PC-3 (cell line): ENCODE measurements at regions of chr7 and their contacts with region 1.

Region 1: DNA sequence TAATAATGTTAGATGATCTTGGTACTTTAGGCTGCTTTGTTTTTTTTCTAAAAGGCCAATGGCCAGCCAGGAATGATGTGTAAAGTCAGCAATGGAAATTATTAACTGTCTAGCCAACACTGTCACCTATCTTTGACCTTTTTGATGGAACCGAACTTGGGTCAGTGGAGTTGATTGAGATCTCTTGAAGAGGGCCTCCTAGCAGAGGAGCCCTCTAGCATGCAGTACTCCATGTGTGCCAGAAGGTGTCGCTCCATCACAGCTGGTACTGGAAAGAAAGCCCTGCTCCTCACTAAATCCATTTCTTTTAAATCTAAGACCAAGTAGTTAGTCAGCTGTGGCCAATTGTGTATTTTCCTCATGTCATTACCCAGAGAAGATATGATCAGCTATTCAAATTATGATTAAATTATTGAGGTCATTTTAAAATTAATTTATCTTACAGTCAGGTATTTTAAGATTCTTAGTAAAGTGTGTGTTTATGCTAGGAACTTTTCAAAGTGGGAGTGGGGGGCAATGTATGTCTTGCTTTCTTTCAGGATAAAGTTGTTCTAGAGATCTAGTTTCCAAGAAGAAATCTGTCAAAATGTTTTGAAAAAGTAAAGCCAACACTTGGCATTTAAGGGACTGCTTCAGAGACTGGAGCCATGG is 33.1 kb upstream of the CROT start:
- DNase-seq: peak; percentile 75
- ATAC-seq: peak; percentile 56
- H3K4me3 ChIP-seq: no peak overlapping the region
- H3K27ac ChIP-seq: no peak overlapping the region
- H3K4me1 ChIP-seq: peaks cover 13% of the 10 kb centered on the region
- H3K27me3 ChIP-seq: 0 out of 2 replicates have a peak, but pooled peaks cover 3% of the 10 kb centered on the region
- CTCF ChIP-seq: peak; percentile 98

Region 2: DNA sequence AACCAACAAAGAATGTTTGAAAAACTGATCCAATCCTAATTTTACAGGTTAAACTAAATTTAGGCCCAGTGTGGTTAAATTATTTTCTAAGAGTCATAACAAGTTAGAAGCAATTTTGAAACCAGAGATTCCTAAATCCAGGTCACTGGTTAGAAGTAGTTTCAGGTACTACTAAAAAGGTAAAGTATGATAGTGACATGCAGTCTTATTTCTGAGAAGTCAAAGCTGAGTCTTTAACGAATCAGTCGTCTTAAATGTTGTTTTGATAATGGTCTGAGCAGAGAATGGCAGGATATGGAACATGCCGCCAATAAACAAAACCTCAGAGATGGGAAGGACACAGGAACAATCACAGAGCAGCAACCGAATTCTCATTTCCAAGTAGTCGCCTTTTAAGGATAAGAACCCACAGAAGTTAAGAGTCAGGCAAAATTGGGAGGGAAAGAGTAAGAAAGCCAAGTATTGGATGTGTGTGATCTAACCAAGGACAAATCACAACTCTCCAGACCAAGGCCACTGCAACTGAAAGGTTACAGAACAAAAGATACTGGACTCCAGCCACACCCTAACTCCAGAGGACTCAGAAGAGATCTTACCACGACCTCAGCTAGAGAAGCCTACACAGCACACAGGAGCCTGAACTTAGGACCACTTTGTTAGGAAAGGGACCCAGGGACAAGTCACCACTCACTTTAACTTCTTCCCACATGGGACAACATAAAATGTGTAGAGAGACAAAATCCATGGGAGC is 112.5 kb before region 1 on chr7:
- CTCF ChIA-PET with region 1: no interaction called
- POLR2A ChIA-PET with region 1: interaction called, 13 read pairs
- intact Hi-C with region 1: no loop called
- DNase-seq: no peak
- ATAC-seq: no peak
- H3K4me3 ChIP-seq: no peak overlapping the region
- H3K27ac ChIP-seq: no peak overlapping the region
- H3K4me1 ChIP-seq: no peaks in the 10 kb centered on the region
- H3K27me3 ChIP-seq: no peaks in the 10 kb centered on the region
- CTCF ChIP-seq: no peak

Region 3: DNA sequence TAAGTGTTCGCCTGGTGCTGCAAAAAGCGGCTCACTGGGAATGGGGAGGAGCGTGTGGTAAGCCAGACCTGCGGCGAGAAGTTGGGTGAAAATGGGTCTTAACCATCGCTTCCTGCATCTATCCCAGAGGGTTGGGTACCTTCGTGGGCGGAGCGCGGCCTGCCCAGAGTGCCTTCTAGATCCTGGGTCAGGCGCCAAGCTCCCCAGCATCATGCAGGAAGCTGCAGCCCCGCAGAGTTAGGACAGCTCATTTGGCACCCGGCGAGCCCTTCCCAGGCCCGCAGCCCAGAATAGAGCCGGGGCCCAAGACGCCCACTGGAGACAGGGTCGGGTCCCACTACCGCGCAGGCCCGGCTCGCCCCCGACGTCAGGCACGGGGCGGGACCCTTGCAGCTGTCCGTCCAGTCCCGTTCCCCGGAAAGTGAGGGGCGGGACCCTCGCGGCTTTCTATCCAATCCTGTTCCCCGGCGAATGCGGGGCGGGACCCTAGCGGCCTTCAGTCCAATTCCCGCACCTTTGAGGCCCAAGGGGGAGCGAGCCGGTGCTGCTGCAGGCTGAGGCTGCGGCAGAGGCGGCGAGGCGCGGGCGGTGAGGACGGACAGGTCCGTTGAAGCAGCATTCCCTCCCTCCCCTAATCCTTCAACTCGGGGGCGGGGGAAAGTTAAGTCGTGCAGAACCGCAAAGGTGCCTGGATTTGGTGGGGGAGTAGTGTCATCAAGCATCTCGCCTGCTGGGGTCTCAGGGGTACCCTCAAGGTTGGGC is 33.0 kb after region 1 on chr7 and contains the start of gene CROT:
- CTCF ChIA-PET with region 1: no interaction called
- POLR2A ChIA-PET with region 1: no interaction called
- intact Hi-C with region 1: loop called (anchors 1 kb)
- DNase-seq: peak; percentile 91
- ATAC-seq: peak; percentile 98
- H3K4me3 ChIP-seq: peak within 1 kb of the TSS; percentile 84
- H3K27ac ChIP-seq: peak within 1 kb of the TSS; percentile 60
- H3K4me1 ChIP-seq: peaks cover 27% of the 10 kb centered on the region; the same call in 1 of the 2 replicates
- H3K27me3 ChIP-seq: no peaks in the 10 kb centered on the region
- CTCF ChIP-seq: no peak
- total RNA-seq, gene CROT: 6.9 and 7.7 TPM in 2 replicates

Region 4: GRCh38 chr7:87376036-87376435 is 63.7 kb after region 1 on chr7:
- CTCF ChIA-PET with region 1: no interaction called
- POLR2A ChIA-PET with region 1: no interaction called
- intact Hi-C with region 1: loop called (anchors 1 kb)
- DNase-seq: peak; percentile 17
- ATAC-seq: peak; percentile 85
- H3K4me3 ChIP-seq: no peak overlapping the region
- H3K27ac ChIP-seq: no peak overlapping the region
- H3K4me1 ChIP-seq: peaks cover 19% of the 10 kb centered on the region
- H3K27me3 ChIP-seq: no peaks in the 10 kb centered on the region
- CTCF ChIP-seq: no peak

Region 5: DNA sequence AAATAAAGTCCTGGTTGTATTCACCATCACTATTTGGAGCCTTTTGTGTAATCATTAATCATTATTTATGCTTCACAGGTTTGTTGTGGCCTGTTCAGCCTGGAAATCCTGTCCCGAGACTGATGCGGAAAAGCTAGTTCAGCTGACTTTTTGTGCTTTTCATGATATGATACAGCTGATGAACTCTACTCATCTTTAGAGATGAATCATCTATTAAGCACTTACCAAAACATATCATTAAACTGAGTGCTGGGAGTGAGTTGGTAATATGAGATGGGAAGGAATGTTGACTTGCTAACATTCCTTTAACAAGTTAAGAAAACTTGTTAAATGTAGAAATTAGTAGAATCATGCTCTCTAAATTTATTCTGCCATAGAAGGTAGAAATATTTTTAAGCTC is 86.1 kb after region 1 on chr7:
- CTCF ChIA-PET with region 1: no interaction called
- POLR2A ChIA-PET with region 1: no interaction called
- intact Hi-C with region 1: loop called (anchors 1 kb)
- DNase-seq: peak; percentile 73
- ATAC-seq: peak; percentile 87
- H3K4me3 ChIP-seq: no peak overlapping the region
- H3K27ac ChIP-seq: no peak overlapping the region
- H3K4me1 ChIP-seq: peaks cover 29% of the 10 kb centered on the region
- H3K27me3 ChIP-seq: no peaks in the 10 kb centered on the region
- CTCF ChIP-seq: no peak

Region 6: GRCh38 chr7:87416682-87417587 is 104.6 kb after region 1 on chr7:
- CTCF ChIA-PET with region 1: interaction called, 6 read pairs
- POLR2A ChIA-PET with region 1: interaction called, 4 read pairs
- intact Hi-C with region 1: loop called (anchors 1 kb)
- DNase-seq: peak; percentile 85
- ATAC-seq: 0 out of 2 replicates have a peak, but pooled peaks have one; percentile 11
- H3K4me3 ChIP-seq: no peak overlapping the region
- H3K27ac ChIP-seq: no peak overlapping the region
- H3K4me1 ChIP-seq: peaks cover 25% of the 10 kb centered on the region
- H3K27me3 ChIP-seq: 0 out of 2 replicates have a peak, but pooled peaks cover 7% of the 10 kb centered on the region
- CTCF ChIP-seq: peak; percentile 87

Region 7: GRCh38 chr7:87452273-87452672 is 139.9 kb after region 1 on chr7:
- CTCF ChIA-PET with region 1: no interaction called
- POLR2A ChIA-PET with region 1: no interaction called
- intact Hi-C with region 1: loop called (anchors 1 kb)
- DNase-seq: no peak
- ATAC-seq: peak; percentile 53; the same call in 1 of the 2 replicates
- H3K4me3 ChIP-seq: no peak overlapping the region
- H3K27ac ChIP-seq: no peak overlapping the region
- H3K4me1 ChIP-seq: no peaks in the 10 kb centered on the region
- H3K27me3 ChIP-seq: peaks cover 25% of the 10 kb centered on the region; the same call in 1 of the 2 replicates
- CTCF ChIP-seq: peak; percentile 45; the same call in 1 of the 2 replicates